ENCODE measurements at regions of chr10 and their contacts with region 1.

Region 1: DNA sequence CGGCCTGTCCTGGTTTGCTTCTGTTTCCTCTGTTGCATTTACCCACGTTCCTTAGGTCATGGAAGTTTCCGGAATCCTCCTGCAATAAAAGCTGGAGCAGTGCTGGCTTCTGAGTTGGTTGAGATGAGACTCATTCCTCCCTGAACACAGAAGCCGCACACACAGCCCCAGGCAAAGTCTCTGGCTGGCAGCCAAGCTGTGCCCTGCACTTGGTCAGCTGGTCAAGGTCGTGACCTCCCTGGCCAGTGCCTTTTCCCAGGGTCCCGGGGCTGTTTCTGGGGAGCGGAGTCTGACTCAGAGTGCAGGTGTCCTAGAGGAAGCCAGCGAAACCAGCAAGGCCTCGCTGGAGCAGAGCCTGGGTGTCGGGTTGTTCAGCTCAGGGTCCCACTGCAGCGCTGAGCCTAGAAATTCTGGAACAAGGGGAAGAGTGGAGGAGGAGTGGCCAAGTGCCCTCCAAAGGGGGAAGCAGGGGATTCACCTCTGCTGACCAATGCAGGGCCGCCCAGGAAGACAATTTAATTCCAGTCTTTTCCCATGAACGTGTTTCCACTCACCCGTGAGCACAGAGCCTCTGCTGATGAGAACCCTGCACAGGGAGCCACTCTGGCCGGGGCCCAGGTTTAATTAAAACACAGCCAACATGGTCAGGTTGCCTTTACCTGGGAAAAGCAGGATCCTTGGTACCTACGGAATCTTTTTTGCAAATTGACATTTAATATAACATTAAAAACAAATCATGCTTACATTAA is 245.5 kb upstream of the PPP2R2D start:
- DNase-seq: no peak
- ATAC-seq: peak; percentile 75
- H3K4me3 ChIP-seq: no peak overlapping the region
- H3K27ac ChIP-seq: no peak overlapping the region
- H3K4me1 ChIP-seq: peaks cover 3% of the 10 kb centered on the region; the same call in 1 of the 2 replicates
- H3K27me3 ChIP-seq: no peaks in the 10 kb centered on the region
- CTCF ChIP-seq: no peak

Region 2: DNA sequence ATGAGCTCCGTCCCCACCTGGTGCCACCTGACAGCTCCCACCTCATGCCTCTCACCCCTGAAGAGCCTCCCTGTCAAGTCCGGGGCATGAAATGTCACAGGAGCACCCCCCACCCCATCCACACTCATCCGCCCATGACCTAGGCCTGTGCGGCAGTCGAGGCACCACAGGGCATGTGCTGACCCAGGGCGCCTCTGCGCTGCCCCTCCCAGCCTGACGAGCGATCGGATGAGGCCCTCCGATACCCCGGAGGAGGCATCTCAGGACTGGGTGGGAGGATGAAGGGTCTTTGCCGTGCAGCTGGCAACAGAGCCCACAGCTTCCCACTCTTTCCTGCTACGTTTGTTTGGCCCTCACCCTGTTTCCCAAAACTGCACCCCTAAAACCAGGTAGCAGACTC is 159.4 kb before region 1 on chr10:
- CTCF ChIA-PET with region 1: no interaction called
- POLR2A ChIA-PET with region 1: interaction called, 19 read pairs
- in situ Hi-C with region 1: no loop called
- intact Hi-C with region 1: no loop called
- DNase-seq: no peak
- ATAC-seq: no peak
- H3K4me3 ChIP-seq: no peak overlapping the region
- H3K27ac ChIP-seq: no peak overlapping the region
- H3K4me1 ChIP-seq: no peaks in the 10 kb centered on the region
- H3K27me3 ChIP-seq: peaks cover 5% of the 10 kb centered on the region; the same call in 1 of the 2 replicates
- CTCF ChIP-seq: no peak

Region 3: DNA sequence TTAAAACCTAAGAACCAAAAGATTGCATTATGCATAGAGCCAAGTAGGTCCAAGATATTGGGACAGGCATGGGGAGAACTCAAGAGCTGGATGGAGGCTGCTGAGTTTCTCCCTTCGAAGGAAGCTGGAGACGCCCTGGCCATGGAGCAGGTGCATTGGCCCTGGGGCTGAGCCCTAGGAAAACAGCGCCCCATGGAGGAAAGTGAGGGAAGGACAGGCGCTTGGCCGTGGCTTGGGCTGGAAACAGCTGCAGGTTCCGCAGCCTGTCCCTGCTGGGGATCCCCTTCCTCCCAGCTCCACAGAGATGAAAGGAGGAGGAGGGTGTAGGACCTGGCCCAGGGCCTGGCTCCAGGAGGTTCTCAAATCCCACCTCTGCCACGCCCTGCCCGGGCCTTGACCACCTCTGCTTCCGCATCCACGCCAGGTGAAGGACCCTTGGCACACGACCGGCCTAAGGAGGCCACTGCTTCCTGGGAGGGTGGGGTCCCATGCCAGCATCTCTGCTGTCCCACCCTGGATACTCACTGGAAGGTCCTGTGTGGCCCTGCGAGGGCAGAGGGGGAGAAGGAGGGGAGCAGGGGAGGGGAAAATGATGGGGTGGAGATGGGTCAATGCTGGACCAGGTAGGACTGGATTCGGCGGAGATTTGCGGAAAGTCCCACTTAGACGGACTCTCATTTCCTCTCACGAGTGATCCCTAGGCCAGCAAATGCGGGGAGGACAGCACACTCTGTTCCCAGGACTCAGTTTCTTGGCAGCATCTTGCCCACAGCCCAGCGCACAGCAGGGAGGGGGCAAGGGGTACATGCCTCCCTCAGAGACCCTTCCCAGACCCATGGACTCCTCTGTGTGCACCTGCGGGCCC is 85.2 kb before region 1 on chr10:
- CTCF ChIA-PET with region 1: no interaction called
- POLR2A ChIA-PET with region 1: no interaction called
- in situ Hi-C with region 1: no loop called
- intact Hi-C with region 1: no loop called
- DNase-seq: no peak
- ATAC-seq: no peak
- H3K4me3 ChIP-seq: no peak overlapping the region
- H3K27ac ChIP-seq: no peak overlapping the region
- H3K4me1 ChIP-seq: no peaks in the 10 kb centered on the region
- H3K27me3 ChIP-seq: peaks cover 10% of the 10 kb centered on the region
- CTCF ChIP-seq: no peak

Region 4: DNA sequence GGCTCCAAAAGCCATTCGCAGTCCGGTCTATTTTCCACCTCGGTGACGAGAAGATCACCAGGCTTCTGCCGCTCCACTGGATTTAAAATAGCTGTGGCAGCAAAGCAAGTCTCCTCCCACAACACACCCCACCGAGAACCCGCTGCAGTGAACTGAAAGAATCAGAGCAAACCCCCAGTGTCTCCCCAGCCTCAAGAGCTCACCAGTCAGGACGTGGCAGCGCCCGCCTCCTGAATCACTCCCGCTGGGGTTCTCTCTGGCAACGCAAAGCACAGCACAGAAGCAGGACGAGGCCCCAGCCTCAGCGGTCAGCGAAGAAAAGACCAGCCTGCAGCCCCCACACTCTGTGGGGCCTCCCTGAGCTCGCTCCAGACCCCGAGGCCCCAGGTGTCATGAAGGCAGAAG is 119.4 kb after region 1 on chr10:
- CTCF ChIA-PET with region 1: no interaction called
- POLR2A ChIA-PET with region 1: no interaction called
- in situ Hi-C with region 1: no loop called
- intact Hi-C with region 1: loop called (anchors 5 kb)
- DNase-seq: no peak
- ATAC-seq: no peak
- H3K4me3 ChIP-seq: no peak overlapping the region
- H3K27ac ChIP-seq: no peak overlapping the region
- H3K4me1 ChIP-seq: no peaks in the 10 kb centered on the region
- H3K27me3 ChIP-seq: no peaks in the 10 kb centered on the region; the same call in 1 of the 2 replicates
- CTCF ChIP-seq: no peak